ENCODE measurements at regions of chr9 and their contacts with region 1.

Region 1: GRCh38 chr9:126317513-126317912 is 9.1 kb upstream of the MVB12B start:
- DNase-seq: no peak
- H3K4me3 ChIP-seq: no peak overlapping the region
- H3K27me3 ChIP-seq: peaks cover 2% of the 10 kb centered on the region; the same call in 1 of the 2 replicates
- CTCF ChIP-seq: peak; percentile 18; the same call in 1 of the 2 replicates

Region 2: GRCh38 chr9:126164796-126165525 is 152.6 kb before region 1 on chr9:
- CTCF ChIA-PET with region 1: no interaction called
- POLR2A ChIA-PET with region 1: no interaction called
- DNase-seq: no peak
- H3K4me3 ChIP-seq: no peak overlapping the region
- H3K27me3 ChIP-seq: peaks cover 2% of the 10 kb centered on the region
- CTCF ChIP-seq: no peak

Region 3: DNA sequence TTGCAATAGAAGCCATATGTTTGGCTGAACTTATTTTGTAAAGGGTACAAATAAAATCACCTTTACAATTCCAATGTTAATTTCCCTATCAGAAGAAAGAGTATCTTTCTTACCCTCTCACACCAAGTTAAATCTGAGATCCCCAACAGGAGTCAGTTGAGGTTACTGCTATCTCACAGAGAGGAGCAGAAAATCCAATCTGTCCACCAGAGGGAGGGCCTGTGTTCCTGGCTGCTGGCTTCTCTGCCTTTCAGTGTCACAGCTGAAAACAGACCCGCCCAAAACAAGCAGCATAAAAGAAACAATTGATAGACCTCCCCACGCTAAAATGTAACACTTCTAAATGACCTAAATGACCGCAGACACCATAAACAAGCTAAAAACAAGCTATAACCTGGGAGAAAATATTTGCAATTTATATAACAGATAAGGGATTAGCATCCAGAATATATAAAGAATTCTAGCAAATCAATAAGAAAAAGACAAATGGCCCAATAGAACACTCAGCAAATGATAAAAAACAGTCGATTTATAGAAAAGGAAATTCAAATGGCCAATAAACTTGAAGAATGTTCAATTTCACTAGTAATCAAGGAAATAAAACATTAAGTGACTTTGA is 15.4 kb before region 1 on chr9:
- CTCF ChIA-PET with region 1: interaction called, 22 read pairs
- POLR2A ChIA-PET with region 1: no interaction called
- DNase-seq: peak; percentile 7
- H3K4me3 ChIP-seq: no peak overlapping the region
- H3K27me3 ChIP-seq: peaks cover 8% of the 10 kb centered on the region
- CTCF ChIP-seq: peak; percentile 88